Naive thymus-derived CD4-positive, alpha-beta T cell (primary cell): ENCODE measurements at regions of chr7 and their contacts with region 1.

Region 1: GRCh38 chr7:26237035-26237807 is 35.7 kb downstream of the CBX3 start:
- DNase-seq: no peak
- ATAC-seq: no peak
- H3K4me3 ChIP-seq: no peak overlapping the region
- H3K4me3 Mint-ChIP-seq: no peak overlapping the region
- H3K27ac ChIP-seq: no peak overlapping the region
- H3K27ac Mint-ChIP-seq: no peak overlapping the region
- H3K4me1 ChIP-seq: no peaks in the 10 kb centered on the region
- H3K4me1 Mint-ChIP-seq: no peaks in the 10 kb centered on the region
- H3K27me3 ChIP-seq: no peaks in the 10 kb centered on the region
- H3K27me3 Mint-ChIP-seq: peaks cover 0 to 18% (median 0%) of the 10 kb centered on the region in 5 donors

Region 2: DNA sequence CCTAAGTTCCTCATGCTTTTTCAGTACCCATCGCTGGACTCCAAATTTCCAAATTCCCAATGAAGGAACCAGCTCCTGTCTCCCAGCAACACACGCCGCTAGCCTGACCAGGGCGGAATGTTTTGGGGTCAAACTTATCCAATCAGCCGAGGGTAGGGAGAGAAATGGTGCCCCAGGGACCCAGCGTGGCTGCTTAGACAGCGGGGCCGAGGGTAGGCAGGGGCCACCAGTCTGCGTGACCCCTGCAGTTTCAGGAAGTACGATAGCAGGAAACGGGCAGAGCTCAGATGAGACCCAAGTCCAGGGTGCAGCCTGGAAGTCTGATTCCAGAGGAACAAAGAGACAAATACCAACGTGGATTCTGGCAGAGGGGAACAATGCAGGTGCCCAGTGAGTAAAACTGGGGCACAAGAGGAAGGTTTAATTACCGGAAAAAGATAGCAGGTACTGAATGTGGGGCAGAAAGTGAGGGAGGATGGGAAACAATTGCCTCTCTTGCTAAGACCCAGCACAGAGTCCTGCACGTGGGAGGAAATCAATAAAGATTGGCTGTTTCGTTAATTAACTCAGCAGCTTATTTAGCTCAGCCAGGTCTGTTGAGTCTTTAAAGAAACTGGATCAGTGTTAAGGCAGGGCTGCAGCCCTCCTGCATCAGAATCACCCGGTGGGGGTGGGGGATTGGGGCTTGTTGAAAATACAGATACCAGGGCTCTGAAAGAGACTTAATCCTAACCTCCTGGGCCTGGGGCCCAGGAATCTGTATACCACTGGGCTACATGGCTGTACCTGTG is 135.7 kb before region 1 on chr7:
- CTCF ChIA-PET with region 1: no interaction called
- POLR2A ChIA-PET with region 1: interaction called, 3 read pairs
- intact Hi-C with region 1: loop called in 1 of 2 experiments (anchors 1 kb)
- DNase-seq: peak in 3 of 9 donors; percentile 19 to 26 (median 25)
- ATAC-seq: peak; percentile 20
- H3K4me3 ChIP-seq: peak overlapping the region; percentile 29
- H3K4me3 Mint-ChIP-seq: peak overlapping the region in 9 of 10 donors; percentile 72 to 86 (median 82)
- H3K27ac ChIP-seq: no peak overlapping the region
- H3K27ac Mint-ChIP-seq: peak overlapping the region in 8 of 9 donors; percentile 82 to 98 (median 88)
- H3K4me1 ChIP-seq: peaks cover 0 to 41% of the 10 kb centered on the region in 2 donors
- H3K4me1 Mint-ChIP-seq: peaks cover 12 to 73% (median 48%) of the 10 kb centered on the region in 7 donors
- H3K27me3 ChIP-seq: no peaks in the 10 kb centered on the region
- H3K27me3 Mint-ChIP-seq: no peaks in the 10 kb centered on the region

Region 3: GRCh38 chr7:26278770-26279169 is 41.5 kb after region 1 on chr7:
- CTCF ChIA-PET with region 1: no interaction called
- POLR2A ChIA-PET with region 1: no interaction called
- intact Hi-C with region 1: loop called in 1 of 2 experiments (anchors 5 kb)
- DNase-seq: no peak
- ATAC-seq: peak; percentile 69
- H3K4me3 ChIP-seq: no peak overlapping the region
- H3K4me3 Mint-ChIP-seq: peak overlapping the region in 1 of 10 donors; percentile 50
- H3K27ac ChIP-seq: no peak overlapping the region
- H3K27ac Mint-ChIP-seq: no peak overlapping the region
- H3K4me1 ChIP-seq: no peaks in the 10 kb centered on the region
- H3K4me1 Mint-ChIP-seq: peaks cover 0 to 18% (median 12%) of the 10 kb centered on the region in 7 donors
- H3K27me3 ChIP-seq: no peaks in the 10 kb centered on the region
- H3K27me3 Mint-ChIP-seq: peaks cover 0 to 2% (median 0%) of the 10 kb centered on the region in 5 donors